A673 (cell line): ENCODE measurements at regions of chr7 and their contacts with region 1.

Region 1: GRCh38 chr7:45136106-45137060 is 21.2 kb upstream of the RAMP3 start:
- DNase-seq: peak; percentile 86
- H3K4me3 ChIP-seq: no peak overlapping the region
- H3K27ac ChIP-seq: no peak overlapping the region
- H3K4me1 ChIP-seq: no peaks in the 10 kb centered on the region
- H3K27me3 ChIP-seq: no peaks in the 10 kb centered on the region
- CTCF ChIP-seq: peak; percentile 90

Region 2: DNA sequence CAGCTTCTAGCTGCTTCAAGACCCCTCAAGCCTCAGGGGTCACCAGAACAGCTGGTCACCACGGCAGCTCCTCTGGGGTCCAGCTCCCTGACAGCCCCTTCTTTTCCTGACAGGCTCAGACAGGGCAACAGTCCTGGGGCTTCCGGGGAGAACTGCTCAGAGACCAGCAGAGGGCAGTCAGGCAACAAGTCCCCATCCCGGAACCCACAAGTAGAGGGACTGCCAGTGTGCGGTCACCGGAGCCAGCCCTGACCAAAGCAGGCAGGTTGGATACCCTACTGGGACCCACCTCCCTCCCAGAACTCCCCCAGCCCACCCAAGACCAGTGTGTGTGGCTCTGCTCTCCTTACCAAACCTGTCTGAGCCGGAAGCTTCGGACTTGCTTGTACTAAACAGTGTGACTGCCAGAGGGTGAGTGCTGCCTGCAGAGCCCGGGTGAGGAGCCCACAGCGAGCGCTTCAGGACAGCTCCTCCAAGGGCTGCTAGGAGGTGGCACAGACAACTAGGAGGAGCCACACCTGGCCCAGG is 895.3 kb before region 1 on chr7:
- CTCF ChIA-PET with region 1: interaction called, 5 read pairs
- POLR2A ChIA-PET with region 1: no interaction called
- intact Hi-C with region 1: loop called (anchors 10 kb)
- DNase-seq: peak; percentile 85
- H3K4me3 ChIP-seq: peak overlapping the region; percentile 33
- H3K27ac ChIP-seq: no peak overlapping the region
- H3K4me1 ChIP-seq: no peaks in the 10 kb centered on the region
- H3K27me3 ChIP-seq: no peaks in the 10 kb centered on the region
- CTCF ChIP-seq: peak; percentile 89

Region 3: DNA sequence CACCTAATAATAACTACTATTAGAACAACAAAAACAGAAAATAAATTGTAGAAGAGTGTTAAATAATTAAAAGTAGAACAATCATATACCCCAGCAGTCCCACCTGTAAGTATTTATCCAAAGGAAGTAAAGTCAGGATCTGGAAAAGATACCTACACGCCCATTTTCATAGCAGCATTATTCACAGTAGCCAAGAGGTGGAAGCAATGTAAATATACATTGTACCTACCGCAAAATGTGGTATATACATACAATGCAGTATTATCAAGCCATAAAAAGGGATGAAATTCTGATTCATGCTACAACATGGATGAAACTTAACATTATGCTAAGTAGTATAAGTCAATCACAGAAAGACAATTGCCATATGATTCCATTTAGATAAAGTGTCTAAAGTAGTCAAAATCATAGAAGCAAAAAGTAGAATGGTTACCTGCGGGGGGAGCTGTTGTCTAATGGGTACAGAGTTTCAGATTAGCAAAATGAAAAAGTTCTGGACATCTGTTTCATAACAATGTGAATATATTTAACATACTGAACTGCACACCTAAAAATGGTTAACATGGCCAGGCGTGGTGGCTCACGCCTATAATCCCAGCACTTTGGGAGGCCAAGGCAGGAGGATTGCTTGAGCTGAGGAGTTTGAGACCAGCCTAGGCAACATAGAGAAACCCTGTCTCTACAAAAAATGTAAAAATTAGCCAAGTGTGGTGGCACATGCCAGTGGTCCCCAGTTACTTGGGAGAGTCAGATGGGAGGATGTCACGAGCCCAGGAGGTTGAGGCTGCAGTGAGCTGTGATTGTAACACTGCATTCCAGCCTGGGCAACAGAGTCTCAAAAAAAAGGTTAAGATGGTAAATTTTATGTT is 548.3 kb before region 1 on chr7:
- CTCF ChIA-PET with region 1: no interaction called
- POLR2A ChIA-PET with region 1: no interaction called
- intact Hi-C with region 1: loop called (anchors 1 kb)
- DNase-seq: peak; percentile 67
- H3K4me3 ChIP-seq: no peak overlapping the region
- H3K27ac ChIP-seq: no peak overlapping the region
- H3K4me1 ChIP-seq: no peaks in the 10 kb centered on the region
- H3K27me3 ChIP-seq: no peaks in the 10 kb centered on the region
- CTCF ChIP-seq: peak; percentile 67

Region 4: GRCh38 chr7:44858161-44858560 is 278.2 kb before region 1 on chr7:
- CTCF ChIA-PET with region 1: interaction called, 14 read pairs
- POLR2A ChIA-PET with region 1: no interaction called
- intact Hi-C with region 1: loop called (anchors 5 kb)
- DNase-seq: no peak
- H3K4me3 ChIP-seq: no peak overlapping the region
- H3K27ac ChIP-seq: no peak overlapping the region
- H3K4me1 ChIP-seq: no peaks in the 10 kb centered on the region
- H3K27me3 ChIP-seq: no peaks in the 10 kb centered on the region
- CTCF ChIP-seq: peak; percentile 11; the same call in 1 of the 2 replicates

Region 5: GRCh38 chr7:44973610-44974401 is 162.6 kb before region 1 on chr7:
- CTCF ChIA-PET with region 1: interaction called, 13 read pairs
- POLR2A ChIA-PET with region 1: no interaction called
- intact Hi-C with region 1: no loop called
- DNase-seq: peak; percentile 50
- H3K4me3 ChIP-seq: no peak overlapping the region
- H3K27ac ChIP-seq: no peak overlapping the region
- H3K4me1 ChIP-seq: peaks cover 10% of the 10 kb centered on the region
- H3K27me3 ChIP-seq: no peaks in the 10 kb centered on the region
- CTCF ChIP-seq: peak; percentile 64

Region 6: DNA sequence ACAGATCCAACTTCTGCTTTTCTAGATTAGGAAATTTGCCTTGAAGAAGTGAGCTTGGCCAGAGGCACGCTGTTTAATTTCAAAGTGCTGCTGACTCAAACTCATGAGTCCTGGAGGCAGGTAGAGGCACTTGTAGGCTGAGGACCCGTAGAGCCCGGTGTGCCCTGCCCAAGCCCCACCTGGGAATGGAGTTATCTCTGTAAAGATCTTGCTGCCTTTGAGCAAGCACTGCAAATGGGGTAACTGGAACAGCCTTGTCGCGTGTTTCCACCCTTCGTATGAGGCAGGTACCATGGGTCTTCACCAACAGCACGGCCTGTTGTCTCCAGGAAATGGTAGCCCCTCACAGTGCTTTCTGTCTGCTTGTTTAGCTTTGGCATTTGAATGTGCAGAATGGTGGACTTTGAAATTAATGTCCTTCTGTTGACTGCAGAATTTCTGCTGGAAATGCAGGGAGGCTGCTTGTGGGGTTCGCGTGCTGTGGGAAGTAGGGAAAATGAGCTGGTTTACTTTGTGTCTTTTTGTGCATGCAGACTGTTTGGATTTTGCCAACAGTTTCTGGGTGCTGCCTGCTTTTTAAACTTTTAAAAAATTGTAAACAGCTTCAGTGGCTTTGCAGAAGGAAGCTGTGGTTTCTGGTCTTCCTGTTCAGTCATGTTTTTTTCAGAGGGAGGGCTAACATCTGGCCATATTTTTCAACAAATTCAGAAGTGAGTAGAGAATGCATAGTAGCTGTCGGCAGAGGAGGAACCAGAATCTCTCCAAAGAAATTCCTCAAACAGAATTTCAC is 109.2 kb before region 1 on chr7:
- CTCF ChIA-PET with region 1: no interaction called
- POLR2A ChIA-PET with region 1: no interaction called
- intact Hi-C with region 1: no loop called
- DNase-seq: no peak
- H3K4me3 ChIP-seq: no peak overlapping the region
- H3K27ac ChIP-seq: no peak overlapping the region
- H3K4me1 ChIP-seq: no peaks in the 10 kb centered on the region
- H3K27me3 ChIP-seq: no peaks in the 10 kb centered on the region
- CTCF ChIP-seq: no peak

Region 7: DNA sequence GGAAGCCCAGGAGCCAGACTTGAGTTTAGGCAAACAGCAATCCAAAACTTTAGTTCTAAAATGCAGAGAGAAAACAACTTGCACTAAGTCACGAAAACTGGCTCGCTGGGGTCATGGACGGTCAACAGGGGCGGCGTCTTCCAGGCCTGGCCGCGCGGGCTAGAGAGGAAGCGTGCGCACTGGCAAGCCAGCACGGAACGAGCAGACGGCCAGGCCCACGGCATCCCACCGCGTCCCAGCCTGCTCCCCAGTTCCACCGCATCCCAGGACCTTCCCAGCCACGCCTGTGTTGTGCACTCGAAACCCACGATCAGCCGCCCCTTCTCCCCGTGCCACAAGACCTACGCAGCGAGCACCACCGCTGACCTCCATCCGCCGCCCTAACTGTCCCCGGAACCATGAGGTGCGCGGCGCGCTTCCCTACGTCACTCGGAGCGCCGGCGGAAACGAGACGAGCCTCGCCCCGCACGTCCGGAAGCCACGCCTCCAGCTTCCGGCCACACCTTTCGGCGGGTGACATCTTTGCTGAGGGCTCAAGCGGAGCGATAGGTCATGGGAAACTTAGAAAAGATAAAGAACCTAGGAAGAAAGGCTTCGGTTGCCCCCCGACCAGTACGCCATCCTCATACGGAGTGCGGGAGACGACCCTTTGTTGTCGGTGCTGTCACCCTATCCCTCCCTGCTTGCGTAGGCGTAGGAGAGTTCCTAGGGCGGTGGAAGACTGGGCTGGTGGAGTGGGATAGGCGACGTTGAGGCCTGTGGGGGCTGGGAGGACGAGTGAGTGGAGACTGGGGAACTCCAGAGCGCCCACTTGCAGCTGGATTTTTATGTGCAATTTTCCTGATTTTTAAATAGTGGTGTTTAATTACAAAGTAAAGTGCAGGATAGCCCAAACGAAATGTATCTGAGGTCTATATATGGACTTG is 24.8 kb before region 1 on chr7 and contains the start of gene TBRG4:
- CTCF ChIA-PET with region 1: no interaction called
- POLR2A ChIA-PET with region 1: no interaction called
- intact Hi-C with region 1: loop called (anchors 2 kb)
- DNase-seq: peak; percentile 97
- H3K4me3 ChIP-seq: peak within 1 kb of the TSS; percentile 86
- H3K27ac ChIP-seq: peak within 1 kb of the TSS; percentile 84
- H3K4me1 ChIP-seq: peaks cover 7% of the 10 kb centered on the region
- H3K27me3 ChIP-seq: peaks cover 4% of the 10 kb centered on the region
- CTCF ChIP-seq: peak; percentile 55
- total RNA-seq, gene TBRG4: 127 and 136 TPM in 2 replicates